ENCODE measurements at regions of chr11 and their contacts with region 1.

Region 1: GRCh38 chr11:7098235-7098832 is 9.5 kb downstream of the RBMXL2 start:
- DNase-seq: no peak
- ATAC-seq: peak; percentile 49
- H3K4me3 Mint-ChIP-seq: no peak overlapping the region
- H3K27ac Mint-ChIP-seq: no peak overlapping the region
- H3K4me1 Mint-ChIP-seq: no peaks in the 10 kb centered on the region
- H3K27me3 Mint-ChIP-seq: peaks cover 30% of the 10 kb centered on the region

Region 2: DNA sequence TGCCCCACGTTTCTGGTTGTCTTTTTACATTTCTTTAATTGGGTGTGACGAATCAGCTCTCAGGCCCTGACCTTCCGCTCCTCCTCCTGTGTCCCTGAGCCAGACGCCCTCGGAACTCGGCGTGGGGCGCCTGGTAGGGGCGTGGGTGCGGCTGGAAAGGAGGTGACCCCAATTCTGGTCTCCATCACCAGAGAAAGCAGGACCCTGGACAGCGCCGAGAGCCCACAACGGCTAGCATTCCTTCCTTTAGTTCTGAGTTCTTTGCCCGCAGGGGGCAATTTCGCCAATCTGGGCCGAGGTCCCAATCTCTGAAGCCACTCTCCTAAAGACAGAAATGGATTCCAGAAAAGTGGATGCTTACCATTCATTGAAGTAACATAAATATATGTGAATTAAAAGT is 21.2 kb before region 1 on chr11:
- CTCF ChIA-PET with region 1: no interaction called
- DNase-seq: no peak
- ATAC-seq: no peak
- H3K4me3 Mint-ChIP-seq: no peak overlapping the region
- H3K27ac Mint-ChIP-seq: no peak overlapping the region
- H3K4me1 Mint-ChIP-seq: no peaks in the 10 kb centered on the region
- H3K27me3 Mint-ChIP-seq: no peaks in the 10 kb centered on the region

Region 3: DNA sequence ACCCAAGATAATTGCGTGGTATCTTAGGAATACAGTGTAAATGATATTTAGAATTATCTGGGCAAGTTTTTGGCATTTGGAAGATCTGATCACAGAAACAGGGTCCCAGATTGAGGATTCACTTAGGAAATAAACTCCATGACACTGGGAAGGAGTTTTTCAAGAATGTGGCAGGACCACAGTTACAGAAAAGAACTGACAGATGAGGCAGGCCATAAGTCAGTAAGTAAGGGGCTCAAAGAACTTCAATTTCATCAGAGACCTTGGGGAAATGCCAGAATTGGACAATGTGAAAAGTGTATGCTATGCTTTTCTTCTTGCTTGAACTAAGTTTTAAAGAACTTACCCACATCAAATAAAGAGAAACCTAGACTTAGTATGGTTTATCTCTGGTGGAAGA is 39.7 kb after region 1 on chr11:
- CTCF ChIA-PET with region 1: no interaction called
- DNase-seq: no peak
- ATAC-seq: no peak
- H3K4me3 Mint-ChIP-seq: no peak overlapping the region
- H3K27ac Mint-ChIP-seq: no peak overlapping the region
- H3K4me1 Mint-ChIP-seq: no peaks in the 10 kb centered on the region
- H3K27me3 Mint-ChIP-seq: peaks cover 14% of the 10 kb centered on the region

Region 4: DNA sequence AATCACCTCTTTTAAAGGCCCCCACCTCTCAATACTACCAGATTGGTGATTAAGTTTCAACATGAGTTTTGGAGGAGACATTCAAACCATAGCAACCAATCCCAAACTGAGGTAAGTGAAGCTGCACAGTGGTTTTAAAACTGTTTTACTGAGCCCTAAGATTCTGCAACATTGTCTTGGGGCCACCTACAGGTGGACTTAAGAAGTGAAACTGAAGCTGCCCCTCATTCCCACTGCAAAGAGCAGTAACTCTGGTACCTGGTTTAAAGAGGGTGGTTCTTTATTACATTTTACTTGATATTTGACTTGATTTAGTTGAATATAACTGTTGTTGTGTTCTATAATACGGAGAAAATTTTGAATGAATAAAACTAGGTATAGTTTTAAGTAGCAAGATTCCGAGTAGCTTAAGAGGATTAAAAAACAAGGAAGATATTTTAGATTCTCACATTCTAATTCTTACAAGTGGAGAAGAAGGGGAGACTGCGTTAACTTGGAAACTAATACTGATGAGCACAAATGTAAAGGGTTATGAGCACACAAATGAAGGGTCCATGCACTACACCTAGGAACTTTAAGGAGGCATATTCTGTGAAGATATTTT is 180.1 kb after region 1 on chr11:
- CTCF ChIA-PET with region 1: interaction called, 10 read pairs
- DNase-seq: no peak
- ATAC-seq: peak; percentile 49
- H3K4me3 Mint-ChIP-seq: no peak overlapping the region
- H3K27ac Mint-ChIP-seq: no peak overlapping the region
- H3K4me1 Mint-ChIP-seq: no peaks in the 10 kb centered on the region
- H3K27me3 Mint-ChIP-seq: peaks cover 4% of the 10 kb centered on the region

Measured in activated CD8-positive, alpha-beta memory T cell treated with anti-CD3 and anti-CD28 coated beads, Interleukin-2, amount 10 ng/mL, durations not matched to agents 7 days and 5 days (primary cell).